A673 (cell line): ENCODE measurements at regions of chr6 and their contacts with region 1.

Region 1: GRCh38 chr6:43143235-43144124 is 27.6 kb upstream of the SRF start:
- DNase-seq: peak; percentile 92
- H3K4me3 ChIP-seq: no peak overlapping the region
- H3K27ac ChIP-seq: no peak overlapping the region
- H3K4me1 ChIP-seq: peaks cover 7% of the 10 kb centered on the region
- H3K27me3 ChIP-seq: no peaks in the 10 kb centered on the region
- CTCF ChIP-seq: peak; percentile 99

Region 2: GRCh38 chr6:43013843-43014433 is 129.5 kb before region 1 on chr6 and contains the starts of genes KLHDC3 and MEA1:
- CTCF ChIA-PET with region 1: interaction called, 5 read pairs
- POLR2A ChIA-PET with region 1: no interaction called
- intact Hi-C with region 1: loop called (anchors 1 kb)
- DNase-seq: peak; percentile 100
- H3K4me3 ChIP-seq: peak within 1 kb of the TSS; percentile 82
- H3K27ac ChIP-seq: peak within 1 kb of the TSS; percentile 79
- H3K4me1 ChIP-seq: peaks cover 7% of the 10 kb centered on the region
- H3K27me3 ChIP-seq: no peaks in the 10 kb centered on the region
- CTCF ChIP-seq: no peak
- total RNA-seq, gene KLHDC3: 90.1 and 108 TPM in 2 replicates
- total RNA-seq, gene MEA1: 113 and 125 TPM in 2 replicates

Region 3: GRCh38 chr6:43070028-43070632 is 73.3 kb before region 1 on chr6:
- CTCF ChIA-PET with region 1: interaction called, 4 read pairs
- POLR2A ChIA-PET with region 1: no interaction called
- intact Hi-C with region 1: loop called (anchors 1 kb)
- DNase-seq: peak; percentile 77
- H3K4me3 ChIP-seq: no peak overlapping the region
- H3K27ac ChIP-seq: no peak overlapping the region
- H3K4me1 ChIP-seq: peaks cover 2% of the 10 kb centered on the region
- H3K27me3 ChIP-seq: no peaks in the 10 kb centered on the region
- CTCF ChIP-seq: peak; percentile 75